Gastrocnemius medialis (tissue), 4 donors: ENCODE measurements at regions of chr3 and their contacts with region 1.

Region 1: GRCh38 chr3:150183678-150184425 is 213.2 kb upstream of the PFN2 start:
- DNase-seq: peak; percentile 74 to 82
- ATAC-seq: peak; percentile 99
- H3K4me3 ChIP-seq: peak overlapping the region; percentile 35 to 46 (median 38)
- H3K27ac ChIP-seq: peak overlapping the region; percentile 71 to 77 (median 74)
- H3K4me1 ChIP-seq: peaks cover 5 to 9% of the 10 kb centered on the region in 2 donors
- H3K27me3 ChIP-seq: no peaks in the 10 kb centered on the region
- CTCF ChIP-seq: peak; percentile 50 to 77 (median 70)
- POLR2A ChIP-seq: no peak

Region 2: GRCh38 chr3:149936812-149937233 is 247.0 kb before region 1 on chr3:
- in situ Hi-C with region 1: no loop called
- intact Hi-C with region 1: loop called (anchors 1 kb)
- DNase-seq: peak; percentile 33 to 47
- ATAC-seq: peak; percentile 82 to 87
- H3K4me3 ChIP-seq: no peak overlapping the region
- H3K27ac ChIP-seq: peak overlapping the region in 3 of 4 donors; percentile 11 to 28 (median 17)
- H3K4me1 ChIP-seq: peaks cover 15 to 17% of the 10 kb centered on the region in 2 donors
- H3K27me3 ChIP-seq: no peaks in the 10 kb centered on the region
- CTCF ChIP-seq: peak; percentile 63 to 85 (median 71)
- POLR2A ChIP-seq: no peak

Region 3: GRCh38 chr3:150035301-150035779 is 148.5 kb before region 1 on chr3:
- in situ Hi-C with region 1: no loop called
- intact Hi-C with region 1: loop called (anchors 5 kb)
- DNase-seq: peak; percentile 75 to 77
- ATAC-seq: peak; percentile 77 to 87
- H3K4me3 ChIP-seq: peak overlapping the region in 1 of 4 donors; percentile 18
- H3K27ac ChIP-seq: peak overlapping the region; percentile 91 to 98 (median 94)
- H3K4me1 ChIP-seq: peaks cover 17 to 31% of the 10 kb centered on the region in 2 donors
- H3K27me3 ChIP-seq: no peaks in the 10 kb centered on the region
- CTCF ChIP-seq: peak in 2 of 5 experiments; percentile 19 to 25
- POLR2A ChIP-seq: no peak

Region 4: GRCh38 chr3:150216041-150216811 is 32.4 kb after region 1 on chr3:
- in situ Hi-C with region 1: no loop called
- intact Hi-C with region 1: no loop called
- DNase-seq: peak; percentile 29 to 68
- ATAC-seq: peak; percentile 78 to 92
- H3K4me3 ChIP-seq: no peak overlapping the region
- H3K27ac ChIP-seq: peak overlapping the region; percentile 66 to 77 (median 73)
- H3K4me1 ChIP-seq: peaks cover 13 to 17% of the 10 kb centered on the region in 2 donors
- H3K27me3 ChIP-seq: no peaks in the 10 kb centered on the region
- CTCF ChIP-seq: no peak
- POLR2A ChIP-seq: no peak